HCT116 (cell line): ENCODE measurements at regions of chr1 and their contacts with region 1.

Region 1: GRCh38 chr1:75203415-75204277 is 69.5 kb downstream of the LHX8 start:
- DNase-seq: peak; percentile 54
- ATAC-seq: peak; percentile 87
- H3K4me3 ChIP-seq: no peak overlapping the region
- H3K27ac ChIP-seq: no peak overlapping the region
- H3K4me1 ChIP-seq: no peaks in the 10 kb centered on the region
- H3K27me3 ChIP-seq: peaks cover 23% of the 10 kb centered on the region
- CTCF ChIP-seq: peak; percentile 74 to 97 (median 90)
- POLR2A ChIP-seq: no peak
- RAD21 ChIP-seq: peak; percentile 83

Region 2: GRCh38 chr1:74771913-74772515 is 431.6 kb before region 1 on chr1:
- CTCF ChIA-PET with region 1: interaction called, 32 read pairs
- POLR2A ChIA-PET with region 1: no interaction called
- RAD21 ChIA-PET with region 1: interaction called, 3 read pairs
- intact Hi-C with region 1: loop called (anchors 1 kb)
- DNase-seq: peak; percentile 22
- ATAC-seq: peak; percentile 69
- H3K4me3 ChIP-seq: no peak overlapping the region
- H3K27ac ChIP-seq: no peak overlapping the region
- H3K4me1 ChIP-seq: no peaks in the 10 kb centered on the region
- H3K27me3 ChIP-seq: peaks cover 46% of the 10 kb centered on the region
- CTCF ChIP-seq: peak; percentile 57 to 71 (median 62)
- POLR2A ChIP-seq: no peak
- RAD21 ChIP-seq: peak; percentile 79

Region 3: GRCh38 chr1:74953622-74954021 is 250.0 kb before region 1 on chr1:
- CTCF ChIA-PET with region 1: no interaction called
- POLR2A ChIA-PET with region 1: no interaction called
- RAD21 ChIA-PET with region 1: no interaction called
- intact Hi-C with region 1: no loop called
- DNase-seq: no peak
- ATAC-seq: no peak
- H3K4me3 ChIP-seq: no peak overlapping the region
- H3K27ac ChIP-seq: no peak overlapping the region
- H3K4me1 ChIP-seq: no peaks in the 10 kb centered on the region
- H3K27me3 ChIP-seq: no peaks in the 10 kb centered on the region; the same call in 1 of the 2 replicates
- CTCF ChIP-seq: no peak
- POLR2A ChIP-seq: no peak
- RAD21 ChIP-seq: no peak

Region 4: GRCh38 chr1:75053207-75053606 is 150.4 kb before region 1 on chr1:
- CTCF ChIA-PET with region 1: interaction called, 11 read pairs
- POLR2A ChIA-PET with region 1: no interaction called
- RAD21 ChIA-PET with region 1: no interaction called
- intact Hi-C with region 1: loop called (anchors 1 kb)
- DNase-seq: peak; percentile 2
- ATAC-seq: peak; percentile 67
- H3K4me3 ChIP-seq: no peak overlapping the region
- H3K27ac ChIP-seq: no peak overlapping the region
- H3K4me1 ChIP-seq: no peaks in the 10 kb centered on the region
- H3K27me3 ChIP-seq: peaks cover 20% of the 10 kb centered on the region; the same call in 1 of the 2 replicates
- CTCF ChIP-seq: peak; percentile 20 to 30 (median 28); a peak in 3 of 6 replicates
- POLR2A ChIP-seq: no peak
- RAD21 ChIP-seq: peak; percentile 43; the same call in 1 of the 2 replicates